ENCODE measurements at regions of chr1 and their contacts with region 1.

Region 1: GRCh38 chr1:109548321-109549267 is at the start of gene GNAI3:
- DNase-seq: peak; percentile 97

Region 2: DNA sequence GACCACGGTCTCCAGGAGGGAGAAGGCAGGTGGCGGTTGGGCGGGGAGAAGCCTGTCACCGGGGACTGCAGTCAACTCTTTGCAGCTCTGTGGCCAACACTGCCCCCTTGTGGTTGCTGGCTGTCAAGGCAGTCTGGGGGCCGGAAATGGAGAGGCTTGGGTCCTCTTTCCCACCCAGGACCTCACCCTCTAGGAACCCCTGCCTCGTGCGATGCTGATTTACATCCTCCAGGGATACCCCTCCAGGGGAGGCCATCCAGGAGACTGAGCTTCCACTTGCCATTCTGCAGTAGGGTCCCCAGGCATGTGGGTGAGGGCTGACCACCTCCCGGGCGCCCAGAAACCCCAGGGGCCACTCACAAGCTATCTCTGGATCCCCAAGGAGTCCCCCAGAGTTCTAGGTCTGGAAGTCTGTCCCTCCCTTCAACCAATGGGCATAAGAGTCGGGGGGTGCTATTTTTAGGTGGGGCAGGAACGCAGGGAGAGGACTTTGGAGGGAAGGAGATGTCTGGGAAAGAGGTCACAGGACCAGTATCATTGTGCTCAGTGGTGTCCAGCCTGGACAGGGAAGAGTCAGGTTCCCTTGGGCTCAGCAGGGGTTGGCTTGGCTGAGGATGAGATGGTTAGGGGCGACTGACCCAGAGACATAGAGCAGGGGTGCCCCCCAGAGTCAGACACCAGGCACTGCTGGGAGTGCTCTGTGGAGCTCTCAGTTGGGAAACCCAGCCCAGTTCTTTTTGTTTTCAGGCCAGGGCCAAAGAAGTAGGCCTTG is 16.0 kb before region 1 on chr1:
- CTCF ChIA-PET with region 1: interaction called, 14 read pairs
- POLR2A ChIA-PET with region 1: interaction called, 22 read pairs
- DNase-seq: peak; percentile 95

Region 3: GRCh38 chr1:109570417-109570827 is 21.8 kb after region 1 on chr1:
- CTCF ChIA-PET with region 1: interaction called, 3 read pairs
- POLR2A ChIA-PET with region 1: interaction called, 11 read pairs
- DNase-seq: no peak

Region 4: GRCh38 chr1:109613361-109614147 is 65.0 kb after region 1 on chr1:
- CTCF ChIA-PET with region 1: interaction called, 6 read pairs
- POLR2A ChIA-PET with region 1: interaction called, 16 read pairs
- DNase-seq: no peak

Region 5: GRCh38 chr1:109630081-109630897 is 81.7 kb after region 1 on chr1:
- CTCF ChIA-PET with region 1: interaction called, 42 read pairs
- POLR2A ChIA-PET with region 1: interaction called, 37 read pairs
- DNase-seq: peak; percentile 63

Region 6: GRCh38 chr1:109773146-109773899 is 224.7 kb after region 1 on chr1:
- CTCF ChIA-PET with region 1: interaction called, 14 read pairs
- POLR2A ChIA-PET with region 1: interaction called, 7 read pairs
- DNase-seq: peak; percentile 91

Measured in HEK293T (cell line).